GM12878 (cell line): ENCODE measurements at regions of chr6 and their contacts with region 1.

Region 1: DNA sequence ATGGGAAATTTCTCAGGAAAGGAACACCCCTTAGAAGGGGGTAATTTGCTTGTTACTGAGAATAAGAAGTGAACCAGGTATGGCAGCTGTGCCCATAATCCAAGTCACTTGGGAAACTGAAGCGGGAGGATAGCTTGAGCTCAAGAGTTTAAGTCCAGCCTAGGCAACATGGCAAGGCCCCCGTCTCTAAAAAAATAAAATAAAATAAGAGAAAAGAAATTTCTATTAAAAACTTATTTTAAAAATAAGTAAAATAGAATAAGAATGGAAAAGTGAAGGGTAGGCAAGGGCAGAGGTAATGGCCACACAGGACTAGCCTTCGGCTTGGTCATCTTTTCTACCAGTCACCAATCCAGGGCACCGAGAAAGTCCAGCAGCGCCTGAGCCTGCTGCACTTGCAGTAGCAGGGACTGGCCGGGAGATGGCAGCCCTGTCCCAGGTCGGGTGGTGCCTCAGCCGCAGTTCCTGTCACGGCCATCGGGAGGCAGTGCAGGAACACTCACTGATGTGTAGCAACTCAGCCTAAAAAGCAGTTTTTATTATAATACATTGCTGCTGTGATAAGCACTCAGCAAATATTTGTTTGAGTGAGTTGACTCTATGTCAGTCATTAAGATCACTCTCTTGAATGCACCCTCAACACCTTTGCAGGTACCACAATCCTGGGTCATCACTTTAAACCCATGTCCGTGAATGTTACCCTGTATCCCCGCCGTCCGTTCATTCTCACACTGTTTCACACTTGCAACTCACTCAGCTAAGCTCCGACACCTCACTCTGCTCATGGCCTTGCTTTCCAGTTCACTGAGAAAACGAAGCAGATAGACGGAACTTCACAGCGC is 23.2 kb upstream of the GCM1 start:
- DNase-seq: peak; percentile 37
- ATAC-seq: peak; percentile 90
- H3K4me3 ChIP-seq: no peak overlapping the region
- H3K27ac ChIP-seq: no peak overlapping the region
- H3K4me1 ChIP-seq: no peaks in the 10 kb centered on the region
- H3K27me3 ChIP-seq: no peaks in the 10 kb centered on the region
- CTCF ChIP-seq: peak; percentile 97 to 100 (median 100)
- EP300 ChIP-seq: no peak
- POLR2A ChIP-seq: no peak
- RAD21 ChIP-seq: peak; percentile 100

Region 2: DNA sequence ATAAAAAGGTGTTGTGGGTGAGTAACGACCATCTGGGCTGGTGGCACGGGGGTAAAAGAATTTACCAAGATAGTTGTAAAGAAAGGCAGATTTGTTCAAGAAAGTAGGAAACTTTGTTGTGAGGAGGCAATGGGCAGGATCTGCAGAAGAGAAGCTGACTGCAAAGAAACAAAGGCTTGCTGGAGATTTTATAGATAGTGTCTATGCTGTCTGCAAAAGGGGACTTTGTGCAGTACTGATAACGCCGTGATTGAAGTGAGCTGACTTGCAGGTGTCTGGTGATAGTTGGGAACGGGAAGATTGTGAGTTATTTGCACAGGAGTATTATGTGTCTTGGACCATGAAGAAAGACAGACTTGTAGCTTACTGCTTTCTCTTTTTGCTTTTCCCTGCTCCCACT is 225.5 kb before region 1 on chr6:
- CTCF ChIA-PET with region 1: no interaction called
- POLR2A ChIA-PET with region 1: no interaction called
- RAD21 ChIA-PET with region 1: no interaction called
- SMC1A ChIA-PET with region 1: no interaction called
- in situ Hi-C with region 1: no loop called
- intact Hi-C with region 1: no loop called
- DNase-seq: no peak
- ATAC-seq: no peak
- H3K4me3 ChIP-seq: no peak overlapping the region
- H3K27ac ChIP-seq: no peak overlapping the region
- H3K4me1 ChIP-seq: no peaks in the 10 kb centered on the region
- H3K27me3 ChIP-seq: no peaks in the 10 kb centered on the region
- CTCF ChIP-seq: no peak
- EP300 ChIP-seq: no peak
- POLR2A ChIP-seq: no peak
- RAD21 ChIP-seq: no peak

Region 3: DNA sequence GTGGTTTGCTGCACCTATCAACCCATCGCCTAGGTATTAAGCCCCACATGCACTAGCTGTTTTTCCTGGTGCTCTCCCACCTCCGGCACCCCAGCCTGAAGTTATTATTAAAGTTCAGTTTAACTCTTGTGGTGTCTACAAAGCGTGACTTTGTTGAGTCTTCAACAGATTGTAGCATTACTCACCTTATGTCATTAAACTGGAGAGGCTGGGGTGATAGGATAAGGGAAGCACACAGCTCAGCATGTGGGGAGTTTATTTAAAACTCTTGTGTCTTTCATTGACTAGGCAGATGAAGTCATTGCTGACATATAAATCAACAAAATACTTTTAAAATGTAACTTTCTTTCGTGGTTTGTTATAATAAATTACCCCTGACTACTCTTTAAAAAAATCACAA is 61.5 kb after region 1 on chr6:
- CTCF ChIA-PET with region 1: interaction called, 13 read pairs
- POLR2A ChIA-PET with region 1: interaction called, 6 read pairs
- RAD21 ChIA-PET with region 1: interaction called, 4 read pairs
- SMC1A ChIA-PET with region 1: interaction called, 17 read pairs
- in situ Hi-C with region 1: no loop called
- intact Hi-C with region 1: no loop called
- DNase-seq: no peak
- ATAC-seq: no peak
- H3K4me3 ChIP-seq: no peak overlapping the region
- H3K27ac ChIP-seq: no peak overlapping the region
- H3K4me1 ChIP-seq: peaks cover 26% of the 10 kb centered on the region
- H3K27me3 ChIP-seq: no peaks in the 10 kb centered on the region
- CTCF ChIP-seq: no peak
- EP300 ChIP-seq: no peak
- POLR2A ChIP-seq: no peak
- RAD21 ChIP-seq: no peak

Region 4: DNA sequence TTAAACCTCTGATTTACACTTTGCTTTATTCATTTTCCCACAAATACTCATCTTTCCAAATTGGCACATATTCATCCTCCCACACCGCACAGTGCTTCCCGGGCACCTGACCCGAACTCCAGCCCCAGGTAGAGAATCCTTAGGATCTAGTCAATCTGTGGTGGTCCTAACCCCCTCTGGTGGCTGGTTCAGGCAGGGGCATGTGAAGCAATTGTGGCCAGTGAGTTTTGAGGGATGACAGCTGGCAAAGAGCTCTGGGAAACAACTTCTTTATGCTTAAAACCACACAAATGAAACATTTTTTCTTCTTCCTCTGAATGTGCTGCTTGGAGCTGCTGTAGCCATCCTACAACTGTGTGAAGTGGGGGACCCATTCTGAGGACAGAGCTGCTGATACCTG is 122.3 kb after region 1 on chr6:
- CTCF ChIA-PET with region 1: interaction called, 12 read pairs
- POLR2A ChIA-PET with region 1: no interaction called
- RAD21 ChIA-PET with region 1: interaction called, 7 read pairs
- SMC1A ChIA-PET with region 1: interaction called, 8 read pairs
- in situ Hi-C with region 1: no loop called
- intact Hi-C with region 1: loop called (anchors 5 kb)
- DNase-seq: no peak
- ATAC-seq: peak; percentile 61
- H3K4me3 ChIP-seq: no peak overlapping the region
- H3K27ac ChIP-seq: no peak overlapping the region
- H3K4me1 ChIP-seq: no peaks in the 10 kb centered on the region
- H3K27me3 ChIP-seq: no peaks in the 10 kb centered on the region
- CTCF ChIP-seq: peak; percentile 36 to 61 (median 60); a peak in 5 of 6 replicates
- EP300 ChIP-seq: no peak
- POLR2A ChIP-seq: no peak
- RAD21 ChIP-seq: peak; percentile 58

Region 5: DNA sequence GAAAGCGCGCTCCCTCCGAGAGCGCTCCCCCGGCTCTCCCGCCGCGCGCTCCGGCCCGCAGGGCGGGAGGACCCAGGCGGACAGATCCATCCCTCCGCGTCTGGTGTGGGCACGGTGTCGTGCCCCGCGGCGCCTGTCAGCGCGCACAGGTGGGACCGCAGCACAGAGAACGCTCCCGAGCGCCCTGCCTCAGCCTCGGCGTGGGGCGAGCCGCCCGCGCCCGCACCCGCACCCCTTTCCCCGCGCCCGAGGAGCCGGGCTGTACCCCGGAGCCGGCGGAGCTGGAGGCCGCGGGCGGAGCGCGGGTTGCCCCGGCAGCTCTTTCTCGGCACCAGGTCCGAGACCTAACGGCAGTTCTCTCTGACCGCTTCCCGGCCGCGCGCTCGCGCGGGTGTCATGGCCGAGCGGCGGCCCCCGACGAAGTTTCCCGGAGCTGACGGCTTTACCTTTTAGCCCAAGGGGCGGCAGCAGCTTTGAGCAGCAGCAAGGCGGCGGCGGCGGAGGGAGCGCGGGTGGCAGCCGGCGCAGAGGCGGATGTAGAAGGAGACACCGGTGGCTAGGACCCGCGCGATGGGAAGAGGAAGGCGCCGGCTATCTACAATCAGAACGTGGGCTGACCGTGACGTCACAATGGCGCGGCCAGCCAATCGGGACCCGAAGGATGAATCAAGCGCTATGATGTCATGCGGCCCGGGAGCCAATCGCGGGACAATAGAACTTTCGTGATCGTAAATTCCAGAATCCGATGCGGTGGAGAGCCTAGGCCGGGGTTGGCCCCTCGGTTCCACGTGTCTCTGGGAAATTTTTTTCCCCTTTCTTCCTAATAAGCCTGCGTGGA is 176.8 kb after region 1 on chr6 and contains the start of gene ELOVL5:
- CTCF ChIA-PET with region 1: interaction called, 9 read pairs
- POLR2A ChIA-PET with region 1: interaction called, 3 read pairs
- RAD21 ChIA-PET with region 1: interaction called, 4 read pairs
- SMC1A ChIA-PET with region 1: interaction called, 7 read pairs
- in situ Hi-C with region 1: no loop called
- intact Hi-C with region 1: loop called (anchors 2 kb)
- DNase-seq: peak; percentile 73
- ATAC-seq: peak; percentile 80
- H3K4me3 ChIP-seq: peak within 1 kb of the TSS; percentile 92
- H3K27ac ChIP-seq: peak within 1 kb of the TSS; percentile 85
- H3K4me1 ChIP-seq: peaks cover 11% of the 10 kb centered on the region
- H3K27me3 ChIP-seq: no peaks in the 10 kb centered on the region; a peak in 1 of 4 replicates
- CTCF ChIP-seq: no peak
- EP300 ChIP-seq: no peak
- POLR2A ChIP-seq: peak; percentile 81
- RAD21 ChIP-seq: no peak
- polyA plus RNA-seq, gene ELOVL5: 187 to 195 TPM

Region 6: GRCh38 chr6:53432318-53433161 is 260.7 kb after region 1 on chr6:
- CTCF ChIA-PET with region 1: interaction called, 225 read pairs
- POLR2A ChIA-PET with region 1: interaction called, 3 read pairs
- RAD21 ChIA-PET with region 1: interaction called, 78 read pairs
- SMC1A ChIA-PET with region 1: interaction called, 110 read pairs
- in situ Hi-C with region 1: no loop called
- intact Hi-C with region 1: loop called (anchors 1 kb)
- DNase-seq: no peak
- ATAC-seq: peak; percentile 44
- H3K4me3 ChIP-seq: no peak overlapping the region
- H3K27ac ChIP-seq: no peak overlapping the region
- H3K4me1 ChIP-seq: no peaks in the 10 kb centered on the region
- H3K27me3 ChIP-seq: no peaks in the 10 kb centered on the region
- CTCF ChIP-seq: no peak
- EP300 ChIP-seq: no peak
- POLR2A ChIP-seq: no peak
- RAD21 ChIP-seq: no peak

Region 7: GRCh38 chr6:53461041-53461656 is 289.3 kb after region 1 on chr6:
- CTCF ChIA-PET with region 1: interaction called, 15 read pairs
- POLR2A ChIA-PET with region 1: no interaction called
- RAD21 ChIA-PET with region 1: interaction called, 9 read pairs
- SMC1A ChIA-PET with region 1: interaction called, 6 read pairs
- in situ Hi-C with region 1: no loop called
- intact Hi-C with region 1: no loop called
- DNase-seq: peak; percentile 65
- ATAC-seq: peak; percentile 81
- H3K4me3 ChIP-seq: 0 out of 2 replicates have a peak overlapping the region, but pooled peaks have one; percentile 30
- H3K27ac ChIP-seq: peak overlapping the region; percentile 41; the same call in 1 of the 2 replicates
- H3K4me1 ChIP-seq: no peaks in the 10 kb centered on the region
- H3K27me3 ChIP-seq: no peaks in the 10 kb centered on the region
- CTCF ChIP-seq: no peak
- EP300 ChIP-seq: peak; percentile 40 to 60; a peak in 2 of 4 replicates
- POLR2A ChIP-seq: no peak
- RAD21 ChIP-seq: no peak